Left cardiac atrium (tissue), 4 donors: ENCODE measurements at regions of chrX and their contacts with region 1.

Region 1: DNA sequence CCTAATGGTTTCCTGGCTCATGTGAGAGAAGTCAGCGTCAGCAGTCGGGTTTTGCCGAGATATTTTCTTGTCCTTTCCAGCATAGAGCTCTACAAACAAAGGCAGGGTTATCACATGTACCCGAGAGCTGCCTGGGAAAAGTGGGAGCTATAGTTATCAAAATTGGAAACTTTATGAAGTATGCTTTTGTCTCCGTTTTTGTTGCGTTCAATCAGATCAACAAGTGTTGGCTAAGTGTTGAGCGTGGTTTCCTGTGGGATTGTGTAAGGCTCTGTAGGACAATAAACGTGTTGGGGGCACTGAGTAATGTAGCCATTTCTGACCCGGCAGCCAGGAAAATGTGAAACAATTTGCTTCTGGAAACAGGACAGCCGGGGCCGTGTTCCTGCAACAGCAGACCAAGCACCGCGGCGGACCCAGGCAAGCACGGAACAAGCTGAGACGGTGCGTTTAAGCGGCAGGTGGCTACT is at the start of gene BMX:
- DNase-seq: peak; percentile 54
- ATAC-seq: peak; percentile 35 to 55
- total RNA-seq, gene BMX: 1.6 to 16.8 TPM

Region 2: DNA sequence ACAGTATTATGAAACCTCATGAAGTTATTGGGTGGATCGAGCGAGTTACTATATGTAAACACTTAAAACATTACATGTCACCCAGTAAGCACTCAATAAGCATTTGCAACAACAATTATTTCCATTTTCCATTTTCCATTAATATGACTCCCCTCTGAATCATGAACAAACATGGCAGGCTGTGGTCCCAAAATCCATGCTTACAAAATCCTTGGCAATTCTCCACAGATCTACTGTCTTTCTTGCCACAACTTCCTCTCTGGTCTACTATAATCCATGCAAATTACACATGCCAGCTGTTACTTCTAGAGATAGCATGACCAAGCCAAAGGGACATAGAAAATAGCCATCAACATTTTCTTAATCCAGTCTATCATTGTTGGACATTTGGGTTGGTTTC is 207.1 kb before region 1 on chrX:
- intact Hi-C with region 1: no loop called
- DNase-seq: no peak
- ATAC-seq: no peak

Region 3: GRCh38 chrX:15564981-15565579 is 64.5 kb after region 1 on chrX:
- intact Hi-C with region 1: loop called in 1 of 2 experiments (anchors 2 kb)
- DNase-seq: peak; percentile 76
- ATAC-seq: peak; percentile 80 to 92

Region 4: DNA sequence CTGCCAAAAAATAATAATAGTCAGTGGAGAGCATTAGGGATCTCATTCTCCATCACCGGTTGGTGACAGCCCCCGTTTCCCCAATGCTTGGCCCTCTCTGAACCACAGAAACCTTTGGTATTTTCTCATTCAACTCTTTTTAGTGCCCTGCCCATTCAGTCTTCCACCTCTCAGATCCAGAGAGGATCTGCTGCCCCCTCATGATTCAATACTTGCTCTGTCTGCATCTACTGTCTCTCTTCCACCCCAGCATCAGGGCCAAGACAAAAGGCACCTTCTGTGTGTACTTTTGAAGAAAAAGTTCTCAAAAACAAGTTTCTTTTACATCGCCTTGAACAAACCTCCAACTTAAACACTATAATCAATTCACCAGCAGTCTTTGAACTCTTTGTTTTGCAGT is 144.7 kb after region 1 on chrX:
- intact Hi-C with region 1: loop called in 1 of 2 experiments (anchors 10 kb)
- DNase-seq: no peak
- ATAC-seq: no peak